AG04450 (cell line): ENCODE measurements at regions of chr16 and their contacts with region 1.

Region 1: DNA sequence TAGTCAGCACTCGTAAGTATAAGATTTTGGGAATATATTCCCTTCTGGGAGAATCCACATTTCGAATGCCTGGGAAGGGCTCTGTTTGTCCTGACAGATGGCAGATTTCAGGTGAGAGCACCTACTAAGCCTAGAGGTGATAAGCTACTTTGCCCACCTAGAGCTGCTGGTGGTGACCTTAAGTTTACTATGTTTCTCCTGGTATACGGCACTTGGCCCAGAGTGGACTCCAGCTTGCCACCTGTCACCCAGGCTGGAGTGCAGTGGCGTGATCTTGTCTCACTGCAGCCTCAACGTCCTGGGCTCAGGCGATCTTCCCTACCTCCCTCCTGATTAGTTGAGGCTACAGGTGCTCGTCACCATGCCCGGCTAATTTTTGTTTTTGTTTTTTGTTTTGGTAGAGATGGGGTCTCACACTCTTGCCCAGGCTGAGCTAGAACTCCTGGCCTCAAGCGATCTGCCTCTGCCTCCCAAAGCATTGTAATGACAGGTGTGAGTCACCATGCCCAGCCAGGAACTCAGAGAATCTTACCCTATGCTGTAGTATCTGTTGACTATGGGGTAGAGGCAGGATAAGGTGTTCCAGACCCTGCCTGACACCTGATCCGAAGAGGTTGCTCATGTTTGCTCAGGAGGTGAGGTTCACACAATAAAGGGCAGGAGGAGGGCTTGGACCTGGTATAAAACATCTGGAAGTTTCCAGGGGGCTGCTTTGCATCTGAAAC is at the start of gene ZG16:
- DNase-seq: no peak
- H3K4me3 ChIP-seq: no peak within 1 kb of the TSS
- H3K27ac ChIP-seq: no peak within 1 kb of the TSS
- H3K27me3 ChIP-seq: peaks cover 26% of the 10 kb centered on the region
- CTCF ChIP-seq: no peak
- polyA plus RNA-seq, gene ZG16: not detected in 2 replicates

Region 2: DNA sequence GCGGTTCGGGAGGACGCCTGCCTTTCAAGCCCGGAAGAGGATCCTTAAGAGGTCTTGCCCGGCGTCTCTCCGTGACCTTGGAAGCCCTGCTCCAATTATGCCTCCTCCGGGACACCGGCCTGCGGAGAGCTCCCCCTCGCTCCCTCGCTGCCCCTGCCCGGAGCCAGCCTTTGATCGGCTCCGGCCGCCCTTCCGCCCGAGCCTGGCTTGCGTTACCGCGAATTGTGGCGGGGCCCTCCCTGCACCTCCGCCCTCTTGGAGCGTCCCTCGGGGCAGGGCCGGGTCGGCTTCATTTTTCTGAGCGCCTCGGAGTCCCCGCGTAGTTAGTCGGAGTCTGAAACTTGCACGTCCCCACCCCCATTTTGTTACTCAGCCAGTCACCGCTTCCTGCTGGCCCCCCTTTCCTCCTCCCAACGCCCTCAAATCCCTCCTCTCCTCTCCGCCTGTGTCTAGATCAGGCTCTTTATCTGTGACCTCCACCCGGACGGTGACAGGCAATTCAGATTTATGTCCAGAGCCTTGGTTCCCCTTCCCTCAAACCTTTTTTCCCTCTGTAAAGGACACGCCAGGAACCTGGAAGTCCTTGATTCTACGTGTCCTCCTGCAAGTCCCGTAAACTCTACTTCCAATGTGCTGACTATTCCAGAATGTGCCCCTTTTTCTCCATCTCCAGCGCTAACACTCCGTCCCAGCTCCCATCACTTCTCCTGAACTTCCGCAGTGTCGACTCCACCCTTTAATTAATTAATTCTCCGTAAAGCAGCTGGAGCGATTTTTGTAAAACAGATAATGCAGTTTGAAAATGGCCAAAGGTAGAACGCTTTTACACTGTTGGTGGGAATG is 852.1 kb before region 1 on chr16:
- CTCF ChIA-PET with region 1: no interaction called
- POLR2A ChIA-PET with region 1: interaction called, 15 read pairs
- DNase-seq: no peak
- H3K4me3 ChIP-seq: peak overlapping the region; percentile 84
- H3K27ac ChIP-seq: peak overlapping the region; percentile 92
- H3K27me3 ChIP-seq: no peaks in the 10 kb centered on the region
- CTCF ChIP-seq: no peak

Region 3: DNA sequence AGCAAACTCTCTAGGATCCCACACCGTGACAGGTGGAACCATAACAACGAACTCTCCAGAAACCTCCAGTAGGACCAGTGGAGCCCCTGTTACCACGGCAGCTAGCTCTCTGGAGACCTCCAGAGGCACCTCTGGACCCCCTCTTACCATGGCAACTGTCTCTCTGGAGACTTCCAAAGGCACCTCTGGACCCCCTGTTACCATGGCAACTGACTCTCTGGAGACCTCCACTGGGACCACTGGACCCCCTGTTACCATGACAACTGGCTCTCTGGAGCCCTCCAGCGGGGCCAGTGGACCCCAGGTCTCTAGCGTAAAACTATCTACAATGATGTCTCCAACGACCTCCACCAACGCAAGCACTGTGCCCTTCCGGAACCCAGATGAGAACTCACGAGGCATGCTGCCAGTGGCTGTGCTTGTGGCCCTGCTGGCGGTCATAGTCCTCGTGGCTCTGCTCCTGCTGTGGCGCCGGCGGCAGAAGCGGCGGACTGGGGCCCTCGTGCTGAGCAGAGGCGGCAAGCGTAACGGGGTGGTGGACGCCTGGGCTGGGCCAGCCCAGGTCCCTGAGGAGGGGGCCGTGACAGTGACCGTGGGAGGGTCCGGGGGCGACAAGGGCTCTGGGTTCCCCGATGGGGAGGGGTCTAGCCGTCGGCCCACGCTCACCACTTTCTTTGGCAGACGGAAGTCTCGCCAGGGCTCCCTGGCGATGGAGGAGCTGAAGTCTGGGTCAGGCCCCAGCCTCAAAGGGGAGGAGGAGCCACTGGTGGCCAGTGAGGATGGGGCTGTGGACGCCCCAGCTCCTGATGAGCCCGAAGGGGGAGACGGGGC is 113.4 kb before region 1 on chr16:
- CTCF ChIA-PET with region 1: no interaction called
- POLR2A ChIA-PET with region 1: no interaction called
- DNase-seq: no peak
- H3K4me3 ChIP-seq: no peak overlapping the region
- H3K27ac ChIP-seq: no peak overlapping the region
- H3K27me3 ChIP-seq: peaks cover 15% of the 10 kb centered on the region
- CTCF ChIP-seq: no peak

Region 4: DNA sequence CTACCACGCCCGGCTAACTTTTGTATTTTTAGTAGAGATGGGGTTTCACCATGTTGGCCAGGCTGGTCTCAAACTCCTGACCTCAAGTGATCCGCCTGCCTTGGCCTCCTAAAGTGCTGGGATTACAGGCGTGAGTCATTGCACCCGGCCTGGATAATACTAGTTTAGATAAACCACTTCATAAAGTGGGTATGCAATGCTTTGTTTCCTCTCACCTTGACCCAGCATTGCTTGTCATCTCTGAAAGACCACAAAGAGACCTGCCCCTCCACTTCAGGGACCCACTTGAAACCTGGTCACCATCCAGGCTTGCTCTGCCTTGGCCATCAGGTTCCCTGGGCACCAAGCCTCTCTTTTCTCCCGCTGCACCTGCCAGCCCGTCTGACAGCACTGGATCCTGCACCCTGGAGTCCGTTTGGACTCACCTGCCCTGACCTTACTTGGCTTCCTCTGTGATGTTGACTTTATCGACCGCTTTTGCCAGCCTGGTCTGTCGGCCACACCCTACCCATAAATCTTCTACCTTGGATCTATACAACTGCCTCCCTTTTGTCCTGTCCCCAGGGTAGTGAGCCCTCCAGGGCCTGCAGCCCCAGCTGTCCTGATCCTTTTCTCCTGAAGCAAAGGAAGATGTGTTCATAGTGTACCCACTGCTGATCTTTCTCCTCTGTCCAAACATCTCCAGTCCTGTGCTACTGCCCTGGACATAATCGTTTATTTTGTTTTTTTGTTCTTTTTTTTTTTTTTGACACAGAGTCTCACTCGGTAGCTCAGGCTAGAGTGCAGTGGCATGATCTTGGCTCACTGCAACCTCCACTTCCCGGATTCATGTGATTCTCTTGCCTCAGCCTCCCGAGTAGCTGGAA is 12.3 kb before region 1 on chr16:
- CTCF ChIA-PET with region 1: no interaction called
- POLR2A ChIA-PET with region 1: no interaction called
- DNase-seq: no peak
- H3K4me3 ChIP-seq: no peak overlapping the region
- H3K27ac ChIP-seq: no peak overlapping the region
- H3K27me3 ChIP-seq: peaks cover 12% of the 10 kb centered on the region
- CTCF ChIP-seq: no peak

Region 5: GRCh38 chr16:29839822-29840221 is 62.1 kb after region 1 on chr16:
- CTCF ChIA-PET with region 1: no interaction called
- POLR2A ChIA-PET with region 1: no interaction called
- DNase-seq: no peak
- H3K4me3 ChIP-seq: no peak overlapping the region
- H3K27ac ChIP-seq: no peak overlapping the region
- H3K27me3 ChIP-seq: no peaks in the 10 kb centered on the region
- CTCF ChIP-seq: no peak